CD4-positive, alpha-beta memory T cell (primary cell): ENCODE measurements at regions of chr2 and their contacts with region 1.

Region 1: GRCh38 chr2:72862239-72862988 is 24.8 kb upstream of the SPR start:
- DNase-seq: peak; percentile 79 to 83 (median 80)
- H3K4me3 ChIP-seq: peak overlapping the region in 1 of 2 donors; percentile 36
- H3K4me3 Mint-ChIP-seq: peak overlapping the region in 7 of 8 donors; percentile 37 to 85 (median 61)
- H3K27ac ChIP-seq: no peak overlapping the region
- H3K27ac Mint-ChIP-seq: no peak overlapping the region
- H3K4me1 ChIP-seq: peaks cover 8% of the 10 kb centered on the region
- H3K4me1 Mint-ChIP-seq: peaks cover 5 to 9% (median 8%) of the 10 kb centered on the region in 4 donors
- H3K27me3 ChIP-seq: peaks cover 12% of the 10 kb centered on the region
- H3K27me3 Mint-ChIP-seq: peaks cover 24 to 42% of the 10 kb centered on the region in 2 donors

Region 2: GRCh38 chr2:71545572-71546274 is 1316.7 kb before region 1 on chr2:
- CTCF ChIA-PET with region 1: no interaction called
- POLR2A ChIA-PET with region 1: no interaction called
- intact Hi-C with region 1: loop called (anchors 5 kb)
- DNase-seq: peak in 4 of 5 donors; percentile 20 to 39 (median 28)
- H3K4me3 ChIP-seq: peak overlapping the region in 1 of 2 donors; percentile 22
- H3K4me3 Mint-ChIP-seq: peak overlapping the region; percentile 55 to 82 (median 70)
- H3K27ac ChIP-seq: no peak overlapping the region
- H3K27ac Mint-ChIP-seq: peak overlapping the region in 3 of 7 donors; percentile 4 to 80 (median 38)
- H3K4me1 ChIP-seq: peaks cover 6% of the 10 kb centered on the region
- H3K4me1 Mint-ChIP-seq: peaks cover 8 to 15% (median 12%) of the 10 kb centered on the region in 4 donors
- H3K27me3 ChIP-seq: no peaks in the 10 kb centered on the region
- H3K27me3 Mint-ChIP-seq: peaks cover 10 to 16% of the 10 kb centered on the region in 2 donors

Region 3: GRCh38 chr2:72770879-72771461 is 91.4 kb before region 1 on chr2:
- CTCF ChIA-PET with region 1: interaction called, 65 read pairs
- POLR2A ChIA-PET with region 1: no interaction called
- intact Hi-C with region 1: loop called (anchors 1 kb)
- DNase-seq: peak; percentile 65 to 69 (median 67)
- H3K4me3 ChIP-seq: no peak overlapping the region
- H3K4me3 Mint-ChIP-seq: no peak overlapping the region
- H3K27ac ChIP-seq: no peak overlapping the region
- H3K27ac Mint-ChIP-seq: no peak overlapping the region
- H3K4me1 ChIP-seq: no peaks in the 10 kb centered on the region
- H3K4me1 Mint-ChIP-seq: no peaks in the 10 kb centered on the region
- H3K27me3 ChIP-seq: no peaks in the 10 kb centered on the region
- H3K27me3 Mint-ChIP-seq: no peaks in the 10 kb centered on the region

Region 4: GRCh38 chr2:72780477-72780876 is 81.9 kb before region 1 on chr2:
- CTCF ChIA-PET with region 1: interaction called, 10 read pairs
- POLR2A ChIA-PET with region 1: no interaction called
- intact Hi-C with region 1: no loop called
- DNase-seq: no peak
- H3K4me3 ChIP-seq: no peak overlapping the region
- H3K4me3 Mint-ChIP-seq: no peak overlapping the region
- H3K27ac ChIP-seq: no peak overlapping the region
- H3K27ac Mint-ChIP-seq: no peak overlapping the region
- H3K4me1 ChIP-seq: no peaks in the 10 kb centered on the region
- H3K4me1 Mint-ChIP-seq: peaks cover 0 to 3% (median 2%) of the 10 kb centered on the region in 4 donors
- H3K27me3 ChIP-seq: no peaks in the 10 kb centered on the region
- H3K27me3 Mint-ChIP-seq: no peaks in the 10 kb centered on the region

Region 5: DNA sequence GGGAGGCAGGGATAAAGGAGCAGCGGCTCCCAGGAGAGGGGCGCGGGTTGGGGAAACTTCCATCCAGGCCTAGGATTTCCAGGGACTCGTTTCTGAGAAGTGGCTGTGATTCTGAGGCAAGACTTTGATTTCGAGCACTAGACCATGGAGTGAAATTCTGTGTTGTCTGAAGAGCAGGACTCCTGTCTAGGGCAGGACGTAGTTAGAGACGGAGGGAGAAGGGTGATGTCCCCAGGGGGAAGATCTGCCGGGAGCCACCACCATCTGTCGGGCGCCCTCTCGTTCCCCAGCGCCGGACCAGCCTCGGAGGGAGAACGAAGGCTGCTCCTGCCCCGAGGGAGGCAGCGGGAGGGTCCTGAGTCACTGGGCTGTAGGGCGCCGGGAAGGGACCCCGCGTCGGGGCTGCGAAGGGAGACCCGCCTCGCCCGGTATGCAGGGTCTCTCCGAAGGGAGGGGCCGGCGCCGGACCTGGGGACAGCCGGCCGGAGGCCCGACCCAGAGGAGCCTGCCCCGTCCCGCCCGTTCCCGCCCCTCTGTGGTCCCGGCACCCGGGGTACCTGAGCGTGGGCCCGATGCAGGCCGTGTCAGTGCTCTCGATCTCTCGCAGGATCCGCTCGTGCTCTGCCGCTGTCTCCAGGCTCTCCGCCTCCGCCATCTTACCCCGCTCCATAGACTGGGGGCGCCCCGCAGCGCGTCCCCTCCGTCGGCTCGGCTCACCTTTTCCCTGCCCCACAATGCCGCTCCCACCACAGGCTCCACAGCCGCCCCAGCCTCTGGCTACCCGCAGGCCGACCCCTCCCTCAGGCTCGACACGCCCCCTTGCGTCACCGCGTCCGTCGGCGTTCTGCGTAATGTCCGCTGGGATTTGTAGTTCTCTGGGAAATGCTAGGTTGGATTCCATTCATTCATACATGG is 36.9 kb before region 1 on chr2 and contains the start of gene EXOC6B:
- CTCF ChIA-PET with region 1: interaction called, 4 read pairs
- POLR2A ChIA-PET with region 1: no interaction called
- intact Hi-C with region 1: loop called (anchors 2 kb)
- DNase-seq: peak; percentile 83 to 87 (median 84)
- H3K4me3 ChIP-seq: peak within 1 kb of the TSS; percentile 66 to 75
- H3K4me3 Mint-ChIP-seq: peak within 1 kb of the TSS; percentile 94 to 99 (median 97)
- H3K27ac ChIP-seq: peak within 1 kb of the TSS; percentile 56
- H3K27ac Mint-ChIP-seq: peak within 1 kb of the TSS; percentile 77 to 97 (median 96)
- H3K4me1 ChIP-seq: peaks cover 23% of the 10 kb centered on the region
- H3K4me1 Mint-ChIP-seq: peaks cover 26 to 38% (median 31%) of the 10 kb centered on the region in 4 donors
- H3K27me3 ChIP-seq: no peaks in the 10 kb centered on the region
- H3K27me3 Mint-ChIP-seq: peaks cover 0 to 3% of the 10 kb centered on the region in 2 donors
- total RNA-seq, gene EXOC6B: 17.5 to 19.8 TPM

Region 6: GRCh38 chr2:72887754-72888437 is 25.5 kb after region 1 on chr2:
- CTCF ChIA-PET with region 1: interaction called, 11 read pairs
- POLR2A ChIA-PET with region 1: no interaction called
- intact Hi-C with region 1: no loop called
- DNase-seq: peak in 4 of 5 donors; percentile 13 to 38 (median 32)
- H3K4me3 ChIP-seq: peak overlapping the region; percentile 36 to 51
- H3K4me3 Mint-ChIP-seq: peak overlapping the region; percentile 67 to 85 (median 80)
- H3K27ac ChIP-seq: no peak overlapping the region
- H3K27ac Mint-ChIP-seq: no peak overlapping the region
- H3K4me1 ChIP-seq: peaks cover 7% of the 10 kb centered on the region
- H3K4me1 Mint-ChIP-seq: peaks cover 3 to 10% (median 6%) of the 10 kb centered on the region in 4 donors
- H3K27me3 ChIP-seq: peaks cover 30% of the 10 kb centered on the region
- H3K27me3 Mint-ChIP-seq: peaks cover 33 to 54% of the 10 kb centered on the region in 2 donors